Mammary epithelial cell (primary cell): ENCODE measurements at regions of chr16 and their contacts with region 1.

Region 1: DNA sequence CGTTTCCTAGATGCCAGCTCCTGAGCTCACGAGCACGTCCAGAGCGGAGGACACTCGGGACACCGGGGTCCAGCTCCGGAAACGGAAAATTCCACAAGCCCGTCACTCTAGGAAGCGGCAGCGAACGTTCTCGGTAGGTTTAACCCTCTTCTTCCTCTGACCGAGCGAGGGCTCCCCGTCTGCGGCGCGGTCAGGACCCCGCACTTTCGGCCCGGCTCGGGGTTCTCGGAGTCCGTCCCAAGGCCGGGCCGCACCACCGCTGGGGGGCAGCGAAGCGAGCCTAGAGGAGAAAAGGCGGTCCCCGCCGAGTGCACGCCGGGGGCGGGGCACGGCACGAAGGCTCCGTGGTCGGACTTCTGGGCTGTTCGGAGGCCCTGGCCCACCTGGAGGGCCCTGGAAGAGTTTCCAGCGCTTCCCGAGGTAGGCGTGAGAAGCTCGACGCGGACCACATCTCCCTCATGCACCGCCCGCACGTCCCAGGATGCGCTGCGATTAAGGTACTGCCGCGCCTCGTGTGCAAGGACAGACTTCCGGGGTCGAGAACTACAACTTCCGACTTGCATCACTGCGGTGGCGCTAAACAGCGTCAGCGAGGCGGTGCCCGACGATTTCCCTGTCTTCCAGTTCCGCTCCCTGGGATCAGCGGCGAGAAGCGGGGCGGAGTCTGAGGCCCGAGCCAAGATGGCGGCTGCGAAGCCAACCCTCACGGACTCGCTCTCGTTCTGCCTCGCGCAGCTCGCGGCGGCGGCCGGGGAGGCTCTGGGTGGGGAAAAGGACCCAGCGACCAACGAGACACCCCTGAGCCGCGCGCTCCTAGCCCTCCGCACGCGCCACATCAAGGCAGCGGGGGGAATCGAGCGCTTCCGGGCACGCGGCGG is at the start of gene ARMC5:
- DNase-seq: peak; percentile 97
- H3K4me3 ChIP-seq: peak within 1 kb of the TSS; percentile 79 to 93 (median 88)
- H3K27ac ChIP-seq: peak within 1 kb of the TSS; percentile 91
- H3K4me1 ChIP-seq: peaks cover 41% of the 10 kb centered on the region
- H3K27me3 ChIP-seq: no peaks in the 10 kb centered on the region
- CTCF ChIP-seq: peak; percentile 25 to 68
- total RNA-seq, gene ARMC5: 8.7 to 10.7 TPM

Region 2: GRCh38 chr16:31179747-31180459 is 279.2 kb before region 1 on chr16 and contains the start of gene FUS:
- CTCF ChIA-PET with region 1: no interaction called
- dilution Hi-C with region 1: loop called (anchors 25 kb)
- in situ Hi-C with region 1: loop called in 1 of 2 experiments (anchors 10 kb)
- intact Hi-C with region 1: no loop called
- DNase-seq: peak; percentile 79
- H3K4me3 ChIP-seq: peak within 1 kb of the TSS; percentile 62 to 95 (median 75)
- H3K27ac ChIP-seq: peak within 1 kb of the TSS; percentile 95
- H3K4me1 ChIP-seq: peaks cover 27% of the 10 kb centered on the region
- H3K27me3 ChIP-seq: no peaks in the 10 kb centered on the region
- CTCF ChIP-seq: no peak
- total RNA-seq, gene FUS: 19.5 to 404 TPM

Region 3: GRCh38 chr16:31427441-31428278 is 31.4 kb before region 1 on chr16:
- CTCF ChIA-PET with region 1: no interaction called
- dilution Hi-C with region 1: no loop called
- in situ Hi-C with region 1: no loop called
- intact Hi-C with region 1: no loop called
- DNase-seq: no peak
- H3K4me3 ChIP-seq: peak overlapping the region in 2 of 3 experiments; percentile 24 to 26
- H3K27ac ChIP-seq: no peak overlapping the region
- H3K4me1 ChIP-seq: peaks cover 3% of the 10 kb centered on the region
- H3K27me3 ChIP-seq: peaks cover 2% of the 10 kb centered on the region
- CTCF ChIP-seq: no peak

Region 4: DNA sequence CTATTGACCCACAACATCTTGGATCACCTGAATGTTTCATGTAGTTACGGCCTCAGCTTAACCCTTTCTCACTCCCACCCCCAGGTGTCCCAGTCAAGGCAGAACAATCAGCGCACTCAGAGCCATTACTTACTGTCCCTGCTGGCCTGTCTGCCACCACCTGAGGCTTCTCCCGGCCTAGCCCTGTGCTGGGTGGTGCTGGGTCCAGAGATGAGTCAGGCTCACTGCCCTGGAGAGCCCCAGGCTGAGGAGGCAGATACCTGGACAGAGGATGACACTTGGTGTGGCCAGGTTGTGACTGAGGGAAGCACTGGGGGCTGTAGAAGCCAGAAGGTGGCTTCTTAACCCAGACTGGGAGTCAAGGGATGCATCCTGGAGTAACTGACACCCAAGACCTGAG is 19.9 kb after region 1 on chr16:
- CTCF ChIA-PET with region 1: no interaction called
- dilution Hi-C with region 1: no loop called
- in situ Hi-C with region 1: no loop called
- intact Hi-C with region 1: no loop called
- DNase-seq: no peak
- H3K4me3 ChIP-seq: no peak overlapping the region
- H3K27ac ChIP-seq: no peak overlapping the region
- H3K4me1 ChIP-seq: no peaks in the 10 kb centered on the region
- H3K27me3 ChIP-seq: no peaks in the 10 kb centered on the region
- CTCF ChIP-seq: no peak

Region 5: GRCh38 chr16:31507929-31508705 is 49.0 kb after region 1 on chr16 and contains the start of gene RUSF1:
- CTCF ChIA-PET with region 1: interaction called, 3 read pairs
- dilution Hi-C with region 1: no loop called
- in situ Hi-C with region 1: no loop called
- intact Hi-C with region 1: loop called (anchors 1 kb)
- DNase-seq: peak; percentile 79
- H3K4me3 ChIP-seq: peak within 1 kb of the TSS; percentile 92 to 99 (median 99)
- H3K27ac ChIP-seq: peak within 1 kb of the TSS; percentile 71
- H3K4me1 ChIP-seq: peaks cover 10% of the 10 kb centered on the region
- H3K27me3 ChIP-seq: no peaks in the 10 kb centered on the region
- CTCF ChIP-seq: no peak
- total RNA-seq, gene RUSF1: 40.5 to 46.5 TPM

Region 6: DNA sequence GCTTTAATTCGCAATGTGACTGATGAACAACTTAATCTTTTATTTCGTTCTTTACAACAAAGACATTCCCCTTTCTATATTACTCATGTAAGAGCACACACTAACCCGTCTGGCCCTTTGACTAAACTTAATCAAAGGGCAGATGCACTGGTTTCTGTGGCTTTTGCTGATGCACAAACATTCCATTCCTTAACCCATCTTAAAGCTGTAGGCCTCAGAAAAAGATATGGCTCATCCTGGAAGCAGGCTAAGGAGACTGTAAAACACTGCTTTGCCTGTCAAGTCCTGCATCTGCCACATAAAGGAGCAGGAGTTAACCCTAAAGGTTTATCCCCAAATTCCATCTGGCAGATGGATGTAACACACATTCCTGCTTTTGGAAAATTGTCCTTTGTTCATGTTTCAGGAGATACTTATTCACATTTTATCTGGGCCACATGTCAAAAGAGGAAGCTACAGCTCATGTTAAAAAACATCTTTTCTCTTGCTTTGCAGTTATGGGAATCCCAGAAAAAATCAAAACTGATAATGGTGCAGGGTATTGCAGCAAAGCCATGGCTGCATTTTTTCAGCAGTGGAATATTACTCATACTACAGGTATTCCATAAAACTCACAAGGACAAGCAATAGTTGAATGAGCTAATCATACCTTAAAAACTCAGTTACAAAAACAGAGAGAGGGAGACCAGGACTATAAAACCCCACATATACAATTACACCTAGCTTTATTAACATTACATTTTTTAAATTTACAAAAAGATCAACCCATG is 205.8 kb after region 1 on chr16:
- CTCF ChIA-PET with region 1: no interaction called
- dilution Hi-C with region 1: loop called (anchors 10 kb)
- in situ Hi-C with region 1: no loop called
- intact Hi-C with region 1: no loop called
- DNase-seq: peak; percentile 90
- H3K4me3 ChIP-seq: peak overlapping the region in 1 of 3 experiments; percentile 13
- H3K27ac ChIP-seq: peak overlapping the region; percentile 74
- H3K4me1 ChIP-seq: peaks cover 19% of the 10 kb centered on the region
- H3K27me3 ChIP-seq: no peaks in the 10 kb centered on the region
- CTCF ChIP-seq: no peak

Region 7: DNA sequence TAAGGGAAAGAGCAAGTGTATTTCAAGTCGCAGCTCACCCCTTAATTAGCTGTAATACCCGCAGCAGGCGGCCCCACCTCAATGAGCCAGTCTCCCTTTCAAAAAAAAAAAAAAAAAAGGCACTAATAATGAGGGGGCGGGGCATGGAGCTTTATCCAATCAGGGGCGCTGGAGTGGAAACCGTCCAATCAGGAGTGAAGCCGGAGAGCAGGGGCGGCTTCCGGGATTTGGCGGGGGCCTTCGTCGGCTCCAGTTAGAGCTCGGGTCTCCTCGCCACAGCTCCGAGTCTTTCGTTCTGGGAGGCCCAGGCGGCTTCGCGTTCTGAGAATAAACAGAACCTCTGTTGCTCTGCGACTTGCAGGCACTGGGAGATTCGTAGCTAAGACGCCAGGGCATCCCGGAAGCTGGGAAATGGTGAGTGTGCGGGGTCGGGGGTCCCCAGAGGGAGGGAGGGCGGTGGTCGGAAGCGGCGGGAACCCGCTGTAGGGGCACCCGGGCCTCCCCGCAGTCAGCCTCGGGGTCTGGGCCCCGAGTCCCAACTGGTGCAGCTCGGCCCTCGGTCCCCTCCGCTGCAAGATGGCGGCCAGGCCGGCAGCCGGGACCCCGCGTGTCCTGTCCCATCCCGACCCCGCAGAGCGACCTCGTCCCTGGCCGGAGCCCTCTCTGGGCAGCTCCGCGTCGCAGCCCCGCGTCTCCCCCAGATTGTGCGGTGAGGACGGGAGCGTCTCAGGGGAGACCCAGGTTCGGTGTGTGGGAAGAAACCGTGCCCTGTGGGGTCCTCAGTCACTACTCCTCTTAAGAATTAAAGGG is 414.7 kb after region 1 on chr16 and contains the start of gene ZNF267:
- CTCF ChIA-PET with region 1: interaction called, 5 read pairs
- dilution Hi-C with region 1: no loop called
- in situ Hi-C with region 1: loop called (anchors 10 to 25 kb)
- intact Hi-C with region 1: loop called (anchors 5 kb)
- DNase-seq: peak; percentile 87
- H3K4me3 ChIP-seq: peak within 1 kb of the TSS; percentile 93 to 99 (median 94)
- H3K27ac ChIP-seq: peak within 1 kb of the TSS; percentile 90
- H3K4me1 ChIP-seq: peaks cover 44% of the 10 kb centered on the region
- H3K27me3 ChIP-seq: no peaks in the 10 kb centered on the region
- CTCF ChIP-seq: no peak
- total RNA-seq, gene ZNF267: 11.4 to 14.0 TPM